CD8-positive, alpha-beta T cell (primary cell): ENCODE measurements at regions of chr15 and their contacts with region 1.

Region 1: GRCh38 chr15:65184868-65185738 is at the start of gene CLPX:
- DNase-seq: peak; percentile 80 to 98 (median 92)
- ATAC-seq: peak; percentile 98
- H3K4me3 ChIP-seq: peak within 1 kb of the TSS; percentile 98 to 99
- H3K4me3 Mint-ChIP-seq: peak within 1 kb of the TSS; percentile 95
- H3K27ac ChIP-seq: peak within 1 kb of the TSS; percentile 75 to 88
- H3K27ac Mint-ChIP-seq: peak within 1 kb of the TSS; percentile 94
- H3K4me1 ChIP-seq: peaks cover 15% of the 10 kb centered on the region
- H3K4me1 Mint-ChIP-seq: peaks cover 28% of the 10 kb centered on the region
- H3K27me3 ChIP-seq: no peaks in the 10 kb centered on the region
- H3K27me3 Mint-ChIP-seq: no peaks in the 10 kb centered on the region
- CTCF ChIP-seq: no peak
- total RNA-seq, gene CLPX: 29.0 to 31.7 TPM

Region 2: DNA sequence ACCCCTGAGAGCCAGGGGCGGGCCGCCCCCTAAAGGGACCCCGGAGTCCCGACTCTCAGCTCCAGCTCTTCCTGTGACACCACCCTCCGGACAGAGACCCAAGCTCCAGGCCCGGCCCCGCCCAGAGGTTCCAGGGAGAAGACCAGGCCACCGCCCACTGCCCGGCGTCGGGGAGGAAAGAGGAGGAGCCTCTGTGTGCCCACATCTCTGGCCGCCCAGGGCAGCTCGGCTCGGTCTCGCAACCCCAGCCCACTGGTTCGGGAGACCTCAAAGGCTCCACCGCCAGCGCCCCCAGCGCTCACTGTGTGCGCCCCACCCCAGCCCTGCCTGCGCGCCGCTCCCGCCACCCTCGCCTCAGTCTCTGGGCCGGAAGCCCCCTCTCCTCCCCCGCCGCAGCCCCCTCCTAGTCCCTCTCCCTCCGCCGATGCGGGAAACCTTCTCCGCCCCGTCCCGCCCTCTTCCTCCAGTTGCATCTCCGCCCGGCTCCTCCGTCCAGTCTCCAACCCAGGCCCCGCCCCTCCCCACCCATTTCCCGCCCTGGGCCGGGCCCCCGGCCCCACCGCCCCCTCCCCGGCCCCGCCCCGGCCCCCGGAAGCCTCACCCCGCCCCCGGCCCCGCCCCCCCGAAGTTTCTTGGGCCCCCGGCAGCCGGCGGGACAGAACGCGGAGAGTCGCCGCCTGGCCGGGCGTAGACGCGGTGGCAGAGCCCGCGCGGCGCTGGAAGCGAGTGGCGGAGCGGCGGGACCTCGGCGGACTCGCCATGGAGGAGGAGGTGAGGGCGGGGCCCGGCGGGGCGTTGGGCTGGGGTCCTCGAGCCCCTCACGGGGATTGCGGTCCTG is 343.6 kb before region 1 on chr15 and contains the start of gene PLEKHO2:
- CTCF ChIA-PET with region 1: no interaction called
- POLR2A ChIA-PET with region 1: no interaction called
- intact Hi-C with region 1: loop called in 1 of 2 experiments (anchors 5 kb)
- DNase-seq: peak; percentile 66 to 96 (median 91)
- ATAC-seq: peak; percentile 76
- H3K4me3 ChIP-seq: peak within 1 kb of the TSS; percentile 65 to 71
- H3K4me3 Mint-ChIP-seq: peak within 1 kb of the TSS; percentile 95
- H3K27ac ChIP-seq: peak within 1 kb of the TSS; percentile 57 to 79
- H3K27ac Mint-ChIP-seq: peak within 1 kb of the TSS; percentile 93
- H3K4me1 ChIP-seq: peaks cover 81% of the 10 kb centered on the region
- H3K4me1 Mint-ChIP-seq: peaks cover 82% of the 10 kb centered on the region
- H3K27me3 ChIP-seq: no peaks in the 10 kb centered on the region
- H3K27me3 Mint-ChIP-seq: no peaks in the 10 kb centered on the region
- CTCF ChIP-seq: peak; percentile 40
- total RNA-seq, gene PLEKHO2: 7.9 to 8.2 TPM

Region 3: DNA sequence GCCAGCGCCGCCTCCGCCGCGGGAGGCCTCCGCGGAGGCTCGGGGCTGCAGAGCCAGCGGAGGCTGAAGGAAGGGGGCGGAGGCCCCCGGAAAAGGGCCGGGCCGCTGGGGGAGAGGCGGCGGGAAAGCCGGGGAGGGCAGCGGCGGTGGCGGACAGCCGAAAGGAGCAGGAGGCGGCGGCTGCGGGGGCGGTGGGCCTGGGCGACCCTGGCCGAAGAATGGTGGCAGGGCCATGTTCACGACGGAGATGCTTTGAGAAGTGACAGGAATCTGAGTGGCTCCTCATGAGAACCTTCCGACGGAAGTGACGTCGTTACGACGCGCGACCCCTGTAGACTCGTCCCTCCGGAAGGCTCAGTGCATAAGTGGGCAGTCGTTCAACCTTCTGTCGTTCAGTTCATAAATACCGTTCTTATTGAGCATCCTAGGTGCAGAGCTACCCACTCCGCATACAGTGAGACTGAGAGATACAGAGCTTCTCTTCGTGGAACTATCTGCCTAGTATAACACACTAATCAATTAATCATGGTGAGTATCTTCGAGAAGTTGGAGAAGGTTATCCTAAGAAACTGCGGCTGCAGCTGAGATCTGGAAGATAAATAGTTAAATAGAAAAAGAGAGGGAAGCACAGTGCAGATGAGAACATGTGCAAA is 51.4 kb before region 1 on chr15 and contains the start of gene PDCD7:
- CTCF ChIA-PET with region 1: no interaction called
- POLR2A ChIA-PET with region 1: interaction called, 5 read pairs
- intact Hi-C with region 1: loop called (anchors 1 kb)
- DNase-seq: peak; percentile 60 to 95 (median 86)
- ATAC-seq: peak; percentile 93
- H3K4me3 ChIP-seq: peak within 1 kb of the TSS; percentile 62 to 78
- H3K4me3 Mint-ChIP-seq: peak within 1 kb of the TSS; percentile 91
- H3K27ac ChIP-seq: peak within 1 kb of the TSS; percentile 80 to 83
- H3K27ac Mint-ChIP-seq: peak within 1 kb of the TSS; percentile 96
- H3K4me1 ChIP-seq: peaks cover 26% of the 10 kb centered on the region
- H3K4me1 Mint-ChIP-seq: peaks cover 31% of the 10 kb centered on the region
- H3K27me3 ChIP-seq: no peaks in the 10 kb centered on the region
- H3K27me3 Mint-ChIP-seq: no peaks in the 10 kb centered on the region
- CTCF ChIP-seq: no peak
- total RNA-seq, gene PDCD7: 20.7 to 21.7 TPM

Region 4: GRCh38 chr15:65304389-65305144 is 119.5 kb after region 1 on chr15 and contains the start of gene RNU5B-1:
- CTCF ChIA-PET with region 1: interaction called, 3 read pairs
- POLR2A ChIA-PET with region 1: interaction called, 18 read pairs
- intact Hi-C with region 1: loop called (anchors 1 kb)
- DNase-seq: peak; percentile 41 to 93 (median 72)
- ATAC-seq: peak; percentile 79
- H3K4me3 ChIP-seq: peak within 1 kb of the TSS; percentile 62 to 64
- H3K4me3 Mint-ChIP-seq: peak within 1 kb of the TSS; percentile 94
- H3K27ac ChIP-seq: peak within 1 kb of the TSS; percentile 90 to 98
- H3K27ac Mint-ChIP-seq: peak within 1 kb of the TSS; percentile 98
- H3K4me1 ChIP-seq: peaks cover 10% of the 10 kb centered on the region
- H3K4me1 Mint-ChIP-seq: peaks cover 41% of the 10 kb centered on the region
- H3K27me3 ChIP-seq: no peaks in the 10 kb centered on the region
- H3K27me3 Mint-ChIP-seq: no peaks in the 10 kb centered on the region
- CTCF ChIP-seq: peak; percentile 43
- total RNA-seq, gene RNU5B-1: 17.0 to 36.6 TPM

Region 5: DNA sequence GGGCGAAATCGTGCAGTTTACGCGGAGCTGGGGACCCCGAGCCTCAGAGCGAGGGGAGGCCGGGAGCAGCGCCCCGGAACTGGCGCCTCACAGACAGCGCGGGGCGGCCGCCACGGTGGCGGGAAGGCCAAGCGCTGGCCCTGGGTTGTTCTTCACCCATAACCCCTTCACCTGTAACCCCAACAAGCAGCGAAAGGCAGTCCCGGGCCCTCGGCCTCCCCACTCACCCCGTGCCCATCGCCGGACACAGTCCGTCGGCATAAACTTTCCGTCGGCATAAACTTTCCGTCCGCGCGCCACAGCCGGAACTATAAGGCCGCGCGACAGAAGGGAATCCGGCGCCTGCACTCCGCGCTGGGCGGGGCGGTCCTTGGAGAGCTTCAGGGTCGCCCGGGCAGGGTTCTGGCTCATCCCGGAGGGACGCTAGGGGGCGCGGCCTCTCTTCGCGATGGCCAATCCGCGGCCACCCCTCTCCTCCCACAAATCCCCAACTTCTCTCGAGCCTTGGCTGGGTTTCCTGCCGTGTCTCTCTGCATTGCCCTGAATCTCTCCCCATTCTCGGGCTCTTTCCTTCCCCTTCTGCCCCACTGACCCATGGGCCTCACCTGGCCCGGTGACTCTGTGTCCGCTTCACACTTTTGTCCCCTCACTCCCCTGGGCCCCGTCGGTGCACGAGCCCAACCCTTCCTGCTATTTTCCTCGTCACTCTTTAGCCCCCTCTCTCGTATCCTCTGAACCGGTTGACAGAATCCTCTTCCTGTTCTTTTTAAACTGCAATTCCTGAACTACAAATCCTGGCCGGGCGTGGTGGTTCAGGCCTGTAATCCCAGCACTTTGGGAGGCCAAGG is 426.0 kb after region 1 on chr15 and contains the start of gene INTS14:
- CTCF ChIA-PET with region 1: no interaction called
- POLR2A ChIA-PET with region 1: no interaction called
- intact Hi-C with region 1: loop called in 1 of 2 experiments (anchors 10 kb)
- DNase-seq: peak; percentile 81 to 95 (median 92)
- ATAC-seq: peak; percentile 95
- H3K4me3 ChIP-seq: peak within 1 kb of the TSS; percentile 85 to 96
- H3K4me3 Mint-ChIP-seq: peak within 1 kb of the TSS; percentile 97
- H3K27ac ChIP-seq: peak within 1 kb of the TSS; percentile 80 to 95
- H3K27ac Mint-ChIP-seq: peak within 1 kb of the TSS; percentile 98
- H3K4me1 ChIP-seq: peaks cover 17% of the 10 kb centered on the region
- H3K4me1 Mint-ChIP-seq: peaks cover 43% of the 10 kb centered on the region
- H3K27me3 ChIP-seq: no peaks in the 10 kb centered on the region
- H3K27me3 Mint-ChIP-seq: no peaks in the 10 kb centered on the region
- CTCF ChIP-seq: peak; percentile 26
- total RNA-seq, gene INTS14: 26.7 to 28.6 TPM